Psoas muscle (tissue), 8 donors: ENCODE measurements at regions of chr2 and their contacts with region 1.

Region 1: GRCh38 chr2:85642725-85643124 is 25.3 kb downstream of the SFTPB start:
- DNase-seq: no peak
- ATAC-seq: no peak
- H3K4me3 ChIP-seq: no peak overlapping the region
- H3K27ac ChIP-seq: no peak overlapping the region
- H3K4me1 ChIP-seq: no peaks in the 10 kb centered on the region
- H3K27me3 ChIP-seq: no peaks in the 10 kb centered on the region
- CTCF ChIP-seq: no peak

Region 2: DNA sequence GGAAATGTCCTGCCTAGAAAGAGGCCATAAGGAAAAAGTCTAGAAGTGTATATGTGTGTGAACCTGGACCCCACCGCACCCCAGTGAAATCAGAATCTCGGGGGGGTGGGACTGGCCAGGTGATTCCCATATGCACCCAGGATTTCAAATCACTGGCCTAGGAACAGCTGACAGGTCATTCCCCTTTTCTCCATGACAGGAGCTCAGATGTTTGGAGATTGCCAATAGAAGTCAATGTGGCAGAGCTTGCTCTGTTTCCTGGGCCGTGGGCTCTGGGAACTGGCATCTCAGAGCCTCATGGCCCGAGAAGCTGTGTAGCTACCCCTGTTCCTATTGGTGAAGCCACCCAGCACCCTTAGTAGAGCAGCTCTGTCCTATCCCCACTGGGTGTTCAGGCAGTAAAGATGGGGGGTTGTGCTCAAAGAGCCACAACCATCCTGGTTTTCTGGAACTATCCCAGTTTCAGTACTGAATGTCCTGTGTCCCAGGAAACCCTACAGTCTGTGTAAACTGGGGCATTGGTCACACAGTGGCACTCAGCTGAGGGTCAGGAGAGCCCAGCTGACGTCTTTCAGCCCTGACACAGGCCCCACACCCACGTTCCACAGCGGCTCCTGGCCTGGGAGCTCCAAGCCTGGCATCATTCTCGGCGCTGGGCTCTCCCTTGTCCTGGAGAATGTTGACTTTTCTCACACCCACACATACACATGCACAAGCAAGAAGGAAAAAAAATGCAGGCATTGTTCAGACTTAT is 70.3 kb after region 1 on chr2:
- intact Hi-C with region 1: loop called (anchors 5 kb)
- DNase-seq: peak; percentile 69 to 85
- ATAC-seq: peak; percentile 51 to 90 (median 86)
- H3K4me3 ChIP-seq: no peak overlapping the region
- H3K27ac ChIP-seq: peak overlapping the region; percentile 53
- H3K4me1 ChIP-seq: peaks cover 42% of the 10 kb centered on the region
- H3K27me3 ChIP-seq: no peaks in the 10 kb centered on the region
- CTCF ChIP-seq: no peak

Region 3: DNA sequence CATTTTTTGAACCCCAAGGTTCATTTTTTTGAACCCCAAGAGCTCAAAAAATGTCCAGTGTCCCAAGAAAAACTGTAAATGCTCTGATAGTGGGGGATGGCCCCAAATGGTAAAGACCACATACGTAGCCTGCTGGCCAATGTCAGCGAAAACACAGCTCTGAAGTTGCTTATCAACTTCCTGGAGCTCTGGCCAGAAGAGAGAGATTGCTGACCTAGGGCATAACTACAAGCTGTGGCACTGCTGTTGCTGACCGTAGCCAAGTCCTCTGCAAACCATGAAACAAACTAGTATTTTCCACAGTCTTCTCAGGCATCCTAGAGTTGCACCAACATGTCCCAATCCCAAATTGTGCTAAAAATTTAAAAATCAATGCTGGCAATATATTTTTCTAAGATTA is 643.8 kb after region 1 on chr2:
- intact Hi-C with region 1: loop called in 1 of 2 experiments (anchors 5 kb)
- DNase-seq: no peak
- ATAC-seq: no peak
- H3K4me3 ChIP-seq: no peak overlapping the region
- H3K27ac ChIP-seq: no peak overlapping the region
- H3K4me1 ChIP-seq: peaks cover 56% of the 10 kb centered on the region
- H3K27me3 ChIP-seq: no peaks in the 10 kb centered on the region
- CTCF ChIP-seq: no peak